Lower leg skin (tissue), 4 donors: ENCODE measurements at regions of chr22 and their contacts with region 1.

Region 1: DNA sequence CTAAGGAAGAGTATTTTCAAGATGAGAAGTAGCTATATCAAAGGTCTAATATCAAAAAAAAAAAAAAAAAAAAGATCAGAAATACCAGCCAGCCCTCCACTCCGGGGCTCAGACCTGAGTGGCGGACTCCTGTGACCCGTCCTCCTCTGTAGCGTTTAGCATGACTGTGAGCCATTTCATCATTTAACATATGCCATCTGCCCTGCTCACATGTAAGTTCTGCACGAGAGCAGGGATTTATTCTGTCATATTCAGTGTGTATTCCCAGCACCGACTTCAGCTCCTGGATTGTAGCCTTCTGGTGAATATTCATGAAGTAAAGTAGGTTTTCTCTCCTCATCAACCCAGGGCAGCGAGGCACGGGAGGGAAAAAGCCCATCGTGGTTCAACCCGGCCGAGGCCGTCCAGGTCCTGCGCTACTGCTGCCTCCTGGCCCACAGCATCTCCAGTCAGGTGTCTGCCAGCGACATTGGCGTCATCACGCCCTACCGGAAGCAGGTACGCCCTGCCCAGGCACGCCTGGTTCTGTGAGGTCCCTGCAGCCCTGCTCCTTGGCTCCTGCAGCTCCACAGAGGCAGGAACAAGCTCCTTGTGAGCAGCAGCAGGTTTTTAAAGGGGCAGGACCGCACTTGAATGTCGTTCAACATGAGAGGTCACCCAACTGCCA is 12.7 kb upstream of the PANX2 start:
- DNase-seq: peak; percentile 49 to 90
- H3K4me3 ChIP-seq: no peak overlapping the region
- CTCF ChIP-seq: no peak
- POLR2A ChIP-seq: no peak

Region 2: DNA sequence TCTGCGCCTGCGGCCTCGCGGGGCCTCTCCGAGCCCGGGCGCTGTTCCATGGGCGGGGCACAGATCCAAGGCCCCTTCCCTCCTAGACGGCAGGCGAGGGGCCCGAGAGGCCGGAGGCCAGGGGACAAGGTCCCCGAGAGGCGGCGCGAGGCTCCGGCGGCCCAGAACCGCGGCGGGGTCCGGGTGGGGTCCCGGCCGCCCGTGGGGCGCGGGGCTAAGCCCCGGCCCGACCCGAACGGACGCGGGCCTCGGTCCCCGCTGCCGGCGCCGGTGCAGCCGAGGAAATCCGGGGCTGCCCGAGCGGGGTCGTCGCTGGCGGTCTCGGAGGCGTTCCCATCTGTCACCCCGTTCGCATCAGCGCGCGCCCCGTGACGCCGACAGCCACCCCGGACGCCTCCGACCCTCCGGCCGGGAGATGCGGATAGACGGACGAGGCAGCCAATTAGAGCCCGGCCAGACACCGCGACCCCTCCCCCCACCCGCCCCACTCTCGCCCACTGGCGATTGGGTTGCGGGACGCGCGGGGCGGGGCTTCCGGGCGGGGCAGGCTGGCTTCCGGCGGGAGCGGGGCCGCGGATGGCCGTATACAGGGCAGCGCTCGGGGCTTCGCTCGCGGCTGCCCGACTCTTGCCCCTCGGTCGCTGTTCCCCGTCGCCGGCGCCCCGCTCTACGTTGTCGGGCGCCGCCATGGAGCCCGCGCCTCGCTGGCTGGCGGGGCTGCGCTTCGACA is 42.8 kb after region 1 on chr22 and contains the start of gene SELENOO:
- intact Hi-C with region 1: loop called (anchors 10 kb)
- DNase-seq: peak; percentile 82 to 98
- H3K4me3 ChIP-seq: peak within 1 kb of the TSS; percentile 44
- CTCF ChIP-seq: no peak
- POLR2A ChIP-seq: peak in 1 of 2 donors; percentile 47
- total RNA-seq, gene SELENOO: 33.3 to 52.3 (median 43.1) TPM